Calu3 (cell line): ENCODE measurements at regions of chr7 and their contacts with region 1.

Region 1: GRCh38 chr7:28078036-28078901 is 102.3 kb downstream of the JAZF1 start:
- DNase-seq: peak; percentile 65
- H3K4me3 Mint-ChIP-seq: no peak overlapping the region
- H3K27ac Mint-ChIP-seq: no peak overlapping the region
- H3K4me1 Mint-ChIP-seq: peaks cover 13% of the 10 kb centered on the region
- H3K27me3 Mint-ChIP-seq: no peaks in the 10 kb centered on the region
- CTCF ChIP-seq: peak; percentile 96

Region 2: GRCh38 chr7:27689591-27690164 is 388.6 kb before region 1 on chr7:
- CTCF ChIA-PET with region 1: no interaction called
- intact Hi-C with region 1: loop called (anchors 5 kb)
- DNase-seq: peak; percentile 69
- H3K4me3 Mint-ChIP-seq: no peak overlapping the region
- H3K27ac Mint-ChIP-seq: no peak overlapping the region
- H3K4me1 Mint-ChIP-seq: peaks cover 26% of the 10 kb centered on the region
- H3K27me3 Mint-ChIP-seq: no peaks in the 10 kb centered on the region
- CTCF ChIP-seq: peak; percentile 74

Region 3: GRCh38 chr7:28155964-28156363 is 77.7 kb after region 1 on chr7:
- CTCF ChIA-PET with region 1: no interaction called
- intact Hi-C with region 1: loop called (anchors 1 kb)
- DNase-seq: peak; percentile 73
- H3K4me3 Mint-ChIP-seq: peak overlapping the region; percentile 12
- H3K27ac Mint-ChIP-seq: peak overlapping the region; percentile 11
- H3K4me1 Mint-ChIP-seq: peaks cover 46% of the 10 kb centered on the region
- H3K27me3 Mint-ChIP-seq: no peaks in the 10 kb centered on the region
- CTCF ChIP-seq: no peak